Colonic mucosa (tissue), 4 donors: ENCODE measurements at regions of chr7 and their contacts with region 1.

Region 1: GRCh38 chr7:90271753-90272152 is 26.8 kb downstream of the CFAP69 start:
- DNase-seq: no peak
- H3K4me3 ChIP-seq: no peak overlapping the region
- H3K27ac ChIP-seq: no peak overlapping the region
- H3K4me1 ChIP-seq: no peaks in the 10 kb centered on the region
- H3K27me3 ChIP-seq: no peaks in the 10 kb centered on the region
- CTCF ChIP-seq: no peak

Region 2: GRCh38 chr7:90155206-90155605 is 116.5 kb before region 1 on chr7:
- intact Hi-C with region 1: loop called (anchors 5 kb)
- DNase-seq: no peak
- H3K4me3 ChIP-seq: no peak overlapping the region
- H3K27ac ChIP-seq: no peak overlapping the region
- H3K4me1 ChIP-seq: no peaks in the 10 kb centered on the region
- H3K27me3 ChIP-seq: no peaks in the 10 kb centered on the region
- CTCF ChIP-seq: no peak